ENCODE measurements at regions of chr12 and their contacts with region 1.

Region 1: GRCh38 chr12:132414634-132415326 is 75.2 kb upstream of the FBRSL1 start:
- DNase-seq: peak; percentile 85
- H3K4me3 Mint-ChIP-seq: no peak overlapping the region
- H3K27ac Mint-ChIP-seq: no peak overlapping the region
- H3K4me1 Mint-ChIP-seq: peaks cover 4% of the 10 kb centered on the region
- H3K27me3 Mint-ChIP-seq: peaks cover 22% of the 10 kb centered on the region

Region 2: DNA sequence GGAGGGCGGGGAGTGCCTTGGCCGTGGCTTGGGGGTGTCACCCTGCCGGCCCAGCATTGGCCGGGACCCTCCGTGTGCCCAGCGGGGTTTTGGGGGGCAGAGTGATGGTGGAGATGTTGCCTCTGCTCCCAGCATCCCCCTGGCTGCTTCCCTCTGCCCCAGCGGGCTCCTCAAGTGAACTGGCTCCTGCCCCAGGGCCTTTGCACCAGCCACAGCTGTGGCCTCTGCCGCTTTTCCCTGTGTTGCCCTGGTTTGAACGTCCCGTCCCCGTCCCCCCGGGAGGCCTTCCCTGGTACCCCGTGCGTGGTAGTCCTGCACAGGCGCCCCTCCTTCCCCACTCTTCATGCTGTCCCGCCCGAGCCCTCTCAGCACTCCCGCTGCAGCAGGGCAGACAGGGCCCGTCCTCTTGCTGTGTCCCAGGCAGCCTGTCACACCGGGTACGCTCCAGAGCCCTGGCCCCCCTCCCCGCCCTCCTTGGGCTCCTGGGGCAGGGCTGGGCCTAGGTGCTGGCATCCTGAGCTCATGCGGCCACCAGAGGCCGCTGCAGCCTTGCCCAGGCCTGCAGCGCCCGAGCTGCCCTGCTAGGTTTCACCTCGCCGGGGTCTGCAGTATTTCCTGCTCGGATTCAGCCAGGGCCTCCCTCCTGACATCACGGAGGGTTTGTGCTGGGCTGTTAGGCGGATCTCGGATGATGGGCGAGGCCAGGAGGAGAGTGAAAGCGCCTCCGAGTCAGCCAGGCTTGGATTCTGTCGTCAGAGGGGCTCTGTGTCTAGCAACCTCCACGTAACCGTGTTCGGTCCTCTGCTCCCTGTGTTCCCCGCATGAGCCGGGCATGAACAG is 261.1 kb before region 1 on chr12:
- CTCF ChIA-PET with region 1: interaction called, 27 read pairs
- DNase-seq: peak; percentile 84
- H3K4me3 Mint-ChIP-seq: no peak overlapping the region
- H3K27ac Mint-ChIP-seq: no peak overlapping the region
- H3K4me1 Mint-ChIP-seq: no peaks in the 10 kb centered on the region
- H3K27me3 Mint-ChIP-seq: no peaks in the 10 kb centered on the region

Region 3: GRCh38 chr12:132356691-132357622 is 57.8 kb before region 1 on chr12:
- CTCF ChIA-PET with region 1: no interaction called
- DNase-seq: no peak
- H3K4me3 Mint-ChIP-seq: no peak overlapping the region
- H3K27ac Mint-ChIP-seq: no peak overlapping the region
- H3K4me1 Mint-ChIP-seq: no peaks in the 10 kb centered on the region
- H3K27me3 Mint-ChIP-seq: peaks cover 24% of the 10 kb centered on the region

Region 4: DNA sequence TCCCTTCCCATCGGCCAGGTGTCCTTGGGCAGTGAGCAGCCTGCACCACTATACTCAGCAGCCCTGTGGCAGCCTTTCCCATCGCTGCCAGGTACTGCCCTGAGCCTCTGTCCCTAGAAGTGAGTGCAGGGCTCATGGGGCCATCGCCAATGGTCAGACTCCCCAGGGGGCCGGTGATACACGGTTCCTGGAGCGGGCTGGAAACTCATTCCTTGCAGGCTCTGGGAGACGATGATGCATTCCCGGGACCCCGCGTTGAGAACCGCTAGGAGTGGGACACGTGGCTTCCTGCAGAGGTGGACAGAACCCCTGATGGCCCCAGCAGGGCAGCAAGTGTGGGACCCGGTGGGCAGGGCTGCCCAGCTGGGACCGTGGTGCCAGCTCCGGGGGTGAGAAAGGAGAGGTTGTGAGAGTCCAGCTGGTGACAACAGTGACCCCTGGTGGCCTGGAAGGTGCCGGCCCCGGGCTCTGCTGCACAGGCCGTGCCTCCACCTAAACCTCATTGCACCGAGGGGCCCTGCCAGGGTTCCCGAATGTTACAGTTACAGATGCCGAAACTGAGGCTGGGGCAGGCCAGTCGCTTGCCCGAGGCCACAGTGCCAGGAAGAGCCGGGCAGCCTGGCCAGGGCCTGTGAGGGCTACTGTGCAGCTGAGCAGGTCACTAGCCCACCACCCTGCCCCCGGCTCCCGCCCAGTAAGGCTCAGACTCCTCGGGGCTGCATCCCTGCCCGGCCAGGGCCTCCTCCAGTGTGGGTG is 109.0 kb after region 1 on chr12:
- CTCF ChIA-PET with region 1: interaction called, 77 read pairs
- DNase-seq: peak; percentile 84
- H3K4me3 Mint-ChIP-seq: no peak overlapping the region
- H3K27ac Mint-ChIP-seq: peak overlapping the region; percentile 21
- H3K4me1 Mint-ChIP-seq: peaks cover 4% of the 10 kb centered on the region
- H3K27me3 Mint-ChIP-seq: no peaks in the 10 kb centered on the region

Region 5: DNA sequence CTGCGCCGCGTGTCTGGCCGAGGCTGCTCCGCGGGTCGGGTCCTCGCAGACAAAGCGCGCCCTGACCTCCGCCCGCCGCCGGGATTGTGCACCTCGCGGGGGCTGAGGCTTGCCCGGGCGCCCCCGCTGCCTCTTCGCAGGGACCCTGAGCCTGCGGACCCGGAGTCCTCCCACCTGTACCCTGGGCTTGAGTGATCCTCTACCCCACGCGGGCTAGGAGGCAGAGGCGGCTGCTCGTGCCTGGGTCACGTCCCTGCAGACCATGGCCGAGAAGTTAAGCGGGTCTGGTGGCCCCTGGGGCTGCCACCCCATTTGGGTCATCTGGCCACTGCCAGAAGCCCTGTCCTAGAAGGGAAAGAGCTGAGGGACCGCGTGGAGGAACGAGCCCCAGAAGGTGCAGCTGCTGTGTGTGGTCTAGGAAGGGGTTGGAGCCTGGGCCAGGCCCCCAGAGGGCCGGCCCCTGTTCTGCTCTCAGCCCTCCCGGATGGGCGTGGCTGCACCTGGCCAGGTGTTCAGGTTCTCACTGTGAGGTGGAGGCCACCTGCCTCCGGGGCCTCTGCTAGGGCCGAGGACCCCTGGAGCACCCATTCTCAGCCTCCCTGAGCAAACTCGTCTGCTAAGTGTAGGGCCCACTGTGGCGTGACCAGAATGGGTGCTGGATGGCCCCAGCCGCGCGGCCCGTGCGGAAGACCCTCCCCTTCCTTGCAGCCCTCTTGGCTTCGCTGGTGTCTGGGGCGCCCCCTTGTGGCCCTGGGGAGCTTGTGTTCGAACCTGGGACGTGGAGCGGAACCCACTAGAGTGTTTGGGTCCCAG is 146.0 kb after region 1 on chr12:
- CTCF ChIA-PET with region 1: interaction called, 31 read pairs
- DNase-seq: peak; percentile 86
- H3K4me3 Mint-ChIP-seq: peak overlapping the region; percentile 69
- H3K27ac Mint-ChIP-seq: no peak overlapping the region
- H3K4me1 Mint-ChIP-seq: peaks cover 18% of the 10 kb centered on the region
- H3K27me3 Mint-ChIP-seq: peaks cover 34% of the 10 kb centered on the region

Region 6: GRCh38 chr12:132614861-132615578 is 200.2 kb after region 1 on chr12:
- CTCF ChIA-PET with region 1: interaction called, 47 read pairs
- DNase-seq: peak; percentile 84
- H3K4me3 Mint-ChIP-seq: no peak overlapping the region
- H3K27ac Mint-ChIP-seq: no peak overlapping the region
- H3K4me1 Mint-ChIP-seq: peaks cover 9% of the 10 kb centered on the region
- H3K27me3 Mint-ChIP-seq: peaks cover 77% of the 10 kb centered on the region

Region 7: DNA sequence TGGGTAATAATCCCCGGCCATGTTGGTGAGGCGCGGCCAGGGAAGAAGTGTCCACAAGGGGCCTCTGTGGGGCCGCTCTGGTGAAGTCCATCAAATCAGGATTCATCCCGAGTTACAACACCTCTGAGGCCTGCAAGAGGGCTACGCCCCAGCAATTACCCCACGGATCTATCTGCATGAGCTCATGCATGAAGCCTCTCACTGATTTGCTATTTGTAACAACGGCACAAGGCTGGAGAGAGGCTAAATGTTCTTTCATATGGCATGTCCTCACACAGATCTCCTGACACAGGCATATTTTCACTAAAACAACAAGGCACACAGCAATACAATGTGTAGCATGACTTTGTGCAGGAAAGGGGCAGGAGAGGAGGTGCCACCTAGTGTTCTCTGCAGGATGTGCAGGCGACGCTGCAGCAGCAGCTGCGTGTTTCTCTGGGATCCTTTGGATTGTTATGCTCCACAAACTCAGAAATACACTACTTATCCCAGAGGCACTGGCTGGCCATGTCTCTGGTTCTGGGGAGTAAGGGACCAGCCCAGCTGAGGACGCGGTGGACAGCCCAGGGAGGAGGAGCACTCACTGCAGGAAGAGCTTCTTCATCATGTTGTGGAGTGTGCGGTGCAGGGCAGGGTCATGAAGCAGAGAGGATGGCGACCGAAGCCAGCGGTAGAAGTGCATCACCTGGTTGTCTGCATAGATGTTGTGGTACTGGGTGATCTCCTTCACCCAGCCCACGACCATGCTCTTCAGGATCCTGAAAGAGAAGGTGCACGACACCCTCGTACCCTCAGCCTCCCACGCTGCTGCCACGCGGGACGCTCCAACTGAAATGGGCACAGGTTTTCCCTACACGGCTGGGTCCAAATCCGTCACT is 224.0 kb after region 1 on chr12:
- CTCF ChIA-PET with region 1: interaction called, 17 read pairs
- DNase-seq: peak; percentile 38
- H3K4me3 Mint-ChIP-seq: no peak overlapping the region
- H3K27ac Mint-ChIP-seq: peak overlapping the region; percentile 0
- H3K4me1 Mint-ChIP-seq: peaks cover 10% of the 10 kb centered on the region
- H3K27me3 Mint-ChIP-seq: no peaks in the 10 kb centered on the region